Endothelial cell of umbilical vein (primary cell): ENCODE measurements at regions of chr17 and their contacts with region 1.

Region 1: DNA sequence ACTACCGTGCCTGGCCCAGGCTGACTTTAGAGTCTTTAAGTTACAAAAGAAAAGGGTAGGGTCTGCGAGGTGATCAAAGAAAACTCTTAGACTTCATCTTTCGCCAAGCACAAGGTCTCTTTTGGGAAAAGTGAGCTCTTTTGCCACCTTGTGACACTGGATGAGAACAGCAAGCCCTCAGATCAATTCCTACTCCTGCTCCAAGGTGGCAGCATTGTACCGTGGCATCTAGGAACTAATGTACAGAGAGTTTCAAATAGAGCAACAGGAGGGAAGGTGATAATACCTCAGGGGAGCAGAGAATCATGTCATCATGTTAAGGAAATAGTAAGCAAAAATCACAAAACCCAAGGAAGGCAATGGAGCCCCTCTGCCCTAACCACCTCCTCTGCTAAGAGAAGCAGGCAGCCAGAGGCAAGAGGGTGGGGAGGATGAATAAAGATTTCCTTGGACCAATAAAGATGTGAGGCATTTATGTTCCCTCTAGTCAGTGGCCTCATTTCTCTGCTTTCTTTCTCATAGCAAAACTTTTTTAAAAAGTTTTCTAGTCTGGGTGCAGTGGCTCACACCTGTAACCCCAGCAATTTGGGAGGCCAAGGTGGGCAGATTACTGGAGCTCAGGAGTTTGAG is 2.1 kb upstream of the C17orf78 start:
- DNase-seq: peak; percentile 90
- H3K4me3 ChIP-seq: no peak overlapping the region
- H3K27ac ChIP-seq: no peak overlapping the region
- H3K4me1 ChIP-seq: no peaks in the 10 kb centered on the region
- H3K27me3 ChIP-seq: no peaks in the 10 kb centered on the region
- CTCF ChIP-seq: peak; percentile 94 to 97
- POLR2A ChIP-seq: no peak

Region 2: GRCh38 chr17:37067555-37068111 is 306.0 kb before region 1 on chr17:
- CTCF ChIA-PET with region 1: no interaction called
- POLR2A ChIA-PET with region 1: no interaction called
- dilution Hi-C with region 1: no loop called
- intact Hi-C with region 1: no loop called
- DNase-seq: peak; percentile 72
- H3K4me3 ChIP-seq: no peak overlapping the region
- H3K27ac ChIP-seq: no peak overlapping the region
- H3K4me1 ChIP-seq: peaks cover 3% of the 10 kb centered on the region
- H3K27me3 ChIP-seq: peaks cover 16 to 26% of the 10 kb centered on the region in 2 experiments
- CTCF ChIP-seq: no peak
- POLR2A ChIP-seq: no peak

Region 3: DNA sequence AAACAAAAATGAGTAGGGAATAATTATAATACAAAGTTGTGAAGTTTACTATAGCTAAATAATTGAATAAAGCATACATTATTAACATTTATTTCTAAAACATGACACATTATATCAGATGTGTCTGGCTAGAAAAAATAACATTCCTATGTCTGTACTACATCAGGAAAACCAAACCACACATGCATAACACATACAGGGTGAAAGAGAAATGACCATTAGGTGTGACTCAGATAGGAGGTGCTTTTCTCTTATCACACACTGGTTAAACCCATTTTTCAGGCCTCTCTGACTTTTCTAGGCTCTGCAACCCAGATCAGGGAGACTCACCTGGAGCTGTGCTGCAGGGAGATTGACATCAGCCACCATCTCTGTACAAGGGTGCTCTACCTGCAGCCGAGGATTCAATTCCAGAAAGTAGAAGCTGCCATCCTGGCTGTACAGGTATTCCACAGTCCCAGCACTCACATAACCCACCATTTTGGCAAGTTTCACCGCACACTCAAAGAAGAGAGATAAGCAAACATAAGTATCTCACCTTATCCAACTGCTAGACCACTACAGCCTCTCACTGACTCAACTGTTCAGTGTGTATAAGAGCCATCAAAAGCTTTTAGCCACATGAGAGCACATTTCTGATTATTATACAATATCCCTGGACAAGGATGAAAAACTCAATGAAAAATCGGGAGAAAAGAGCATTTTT is 114.5 kb before region 1 on chr17:
- CTCF ChIA-PET with region 1: interaction called, 9 read pairs
- POLR2A ChIA-PET with region 1: no interaction called
- dilution Hi-C with region 1: no loop called
- intact Hi-C with region 1: loop called (anchors 5 kb)
- DNase-seq: peak; percentile 7
- H3K4me3 ChIP-seq: no peak overlapping the region
- H3K27ac ChIP-seq: no peak overlapping the region
- H3K4me1 ChIP-seq: peaks cover 11% of the 10 kb centered on the region
- H3K27me3 ChIP-seq: no peaks in the 10 kb centered on the region
- CTCF ChIP-seq: no peak
- POLR2A ChIP-seq: no peak

Region 4: GRCh38 chr17:37358830-37359681 is 14.6 kb before region 1 on chr17:
- CTCF ChIA-PET with region 1: interaction called, 41 read pairs
- POLR2A ChIA-PET with region 1: interaction called, 4 read pairs
- dilution Hi-C with region 1: no loop called
- intact Hi-C with region 1: no loop called
- DNase-seq: peak; percentile 95
- H3K4me3 ChIP-seq: peak overlapping the region; percentile 47 to 89 (median 84)
- H3K27ac ChIP-seq: peak overlapping the region; percentile 50
- H3K4me1 ChIP-seq: peaks cover 21% of the 10 kb centered on the region
- H3K27me3 ChIP-seq: no peaks in the 10 kb centered on the region
- CTCF ChIP-seq: peak in 1 of 2 donors; percentile 13
- POLR2A ChIP-seq: no peak

Region 5: GRCh38 chr17:37413875-37414519 is 40.4 kb after region 1 on chr17:
- CTCF ChIA-PET with region 1: interaction called, 10 read pairs
- POLR2A ChIA-PET with region 1: no interaction called
- dilution Hi-C with region 1: no loop called
- intact Hi-C with region 1: no loop called
- DNase-seq: no peak
- H3K4me3 ChIP-seq: no peak overlapping the region
- H3K27ac ChIP-seq: no peak overlapping the region
- H3K4me1 ChIP-seq: no peaks in the 10 kb centered on the region
- H3K27me3 ChIP-seq: no peaks in the 10 kb centered on the region
- CTCF ChIP-seq: peak in 1 of 2 donors; percentile 17
- POLR2A ChIP-seq: no peak

Region 6: GRCh38 chr17:37527249-37527851 is 153.7 kb after region 1 on chr17:
- CTCF ChIA-PET with region 1: interaction called, 17 read pairs
- POLR2A ChIA-PET with region 1: no interaction called
- dilution Hi-C with region 1: no loop called
- intact Hi-C with region 1: loop called (anchors 5 kb)
- DNase-seq: peak; percentile 56
- H3K4me3 ChIP-seq: no peak overlapping the region
- H3K27ac ChIP-seq: no peak overlapping the region
- H3K4me1 ChIP-seq: no peaks in the 10 kb centered on the region
- H3K27me3 ChIP-seq: no peaks in the 10 kb centered on the region
- CTCF ChIP-seq: peak; percentile 57 to 66
- POLR2A ChIP-seq: no peak

Region 7: DNA sequence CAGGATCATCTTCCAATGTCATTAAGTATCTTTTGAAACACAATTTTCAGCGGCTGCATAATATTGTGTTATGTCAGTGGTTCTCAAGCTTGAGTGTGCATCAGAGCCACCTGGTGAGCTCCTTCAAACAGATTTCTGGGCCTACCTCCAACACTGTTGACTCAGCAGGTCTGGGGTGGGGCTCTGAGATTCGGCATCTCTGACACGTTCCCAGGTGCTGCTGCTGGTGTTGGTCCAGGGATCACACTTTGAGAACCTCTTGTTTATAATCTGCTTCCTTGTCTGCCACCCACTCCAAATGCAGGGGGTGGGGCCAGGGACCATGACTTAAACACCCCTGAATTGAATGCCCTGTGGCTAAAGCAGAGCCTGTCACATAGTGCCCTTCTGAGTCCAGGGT is 445.0 kb after region 1 on chr17:
- CTCF ChIA-PET with region 1: interaction called, 12 read pairs
- POLR2A ChIA-PET with region 1: no interaction called
- dilution Hi-C with region 1: no loop called
- intact Hi-C with region 1: no loop called
- DNase-seq: no peak
- H3K4me3 ChIP-seq: no peak overlapping the region
- H3K27ac ChIP-seq: no peak overlapping the region
- H3K4me1 ChIP-seq: peaks cover 3% of the 10 kb centered on the region
- H3K27me3 ChIP-seq: peaks cover 9% of the 10 kb centered on the region in 2 experiments
- CTCF ChIP-seq: no peak
- POLR2A ChIP-seq: no peak